H1 (cell line): ENCODE measurements at regions of chr7 and their contacts with region 1.

Region 1: DNA sequence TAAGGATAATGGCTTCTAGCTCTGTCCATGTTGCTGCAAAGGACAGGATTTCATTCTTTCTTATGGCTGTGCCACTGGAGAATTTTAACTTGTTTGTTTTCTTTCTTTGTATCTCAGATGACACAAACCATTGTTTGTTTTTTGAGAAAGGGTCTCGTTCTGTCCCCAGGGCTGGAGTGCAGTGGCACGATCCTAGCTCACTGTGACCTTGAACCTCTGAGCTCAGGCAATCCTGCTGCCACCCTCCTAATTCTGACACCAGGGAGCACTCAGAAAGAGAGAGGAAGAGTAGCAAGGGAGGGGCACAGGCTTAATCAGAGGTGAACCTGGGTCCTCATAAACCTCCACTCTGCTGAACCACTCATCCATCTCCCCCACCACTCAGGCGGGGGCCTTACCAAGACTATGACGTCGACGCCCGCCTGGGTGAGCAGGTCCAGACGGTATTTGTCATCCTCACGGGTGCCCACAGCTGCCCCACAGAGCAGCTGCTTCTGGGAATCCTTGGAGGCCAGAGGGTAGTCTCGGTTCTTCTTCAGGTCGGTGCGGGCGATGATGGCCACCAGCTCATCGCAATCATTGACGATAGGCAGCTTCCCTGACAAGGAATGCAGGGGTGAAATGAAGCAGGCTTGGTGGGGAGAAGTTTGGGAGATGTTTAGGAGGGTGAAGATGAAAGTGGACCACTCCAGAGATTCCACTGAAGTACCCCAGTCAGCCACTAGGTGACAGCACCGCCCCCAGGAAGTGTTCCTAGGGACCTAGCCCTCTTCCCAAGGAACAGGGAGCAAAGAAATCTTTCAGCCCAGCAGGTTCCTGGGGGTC is 11.6 kb downstream of the IMPDH1 start:
- DNase-seq: peak in 1 of 2 experiments; percentile 92
- H3K4me3 ChIP-seq: no peak overlapping the region
- H3K27ac ChIP-seq: no peak overlapping the region
- H3K4me1 ChIP-seq: no peaks in the 10 kb centered on the region
- H3K27me3 ChIP-seq: no peaks in the 10 kb centered on the region
- CTCF ChIP-seq: peak; percentile 89 to 96 (median 92)
- EP300 ChIP-seq: no peak
- POLR2A ChIP-seq: no peak
- RAD21 ChIP-seq: peak; percentile 83 to 86

Region 2: DNA sequence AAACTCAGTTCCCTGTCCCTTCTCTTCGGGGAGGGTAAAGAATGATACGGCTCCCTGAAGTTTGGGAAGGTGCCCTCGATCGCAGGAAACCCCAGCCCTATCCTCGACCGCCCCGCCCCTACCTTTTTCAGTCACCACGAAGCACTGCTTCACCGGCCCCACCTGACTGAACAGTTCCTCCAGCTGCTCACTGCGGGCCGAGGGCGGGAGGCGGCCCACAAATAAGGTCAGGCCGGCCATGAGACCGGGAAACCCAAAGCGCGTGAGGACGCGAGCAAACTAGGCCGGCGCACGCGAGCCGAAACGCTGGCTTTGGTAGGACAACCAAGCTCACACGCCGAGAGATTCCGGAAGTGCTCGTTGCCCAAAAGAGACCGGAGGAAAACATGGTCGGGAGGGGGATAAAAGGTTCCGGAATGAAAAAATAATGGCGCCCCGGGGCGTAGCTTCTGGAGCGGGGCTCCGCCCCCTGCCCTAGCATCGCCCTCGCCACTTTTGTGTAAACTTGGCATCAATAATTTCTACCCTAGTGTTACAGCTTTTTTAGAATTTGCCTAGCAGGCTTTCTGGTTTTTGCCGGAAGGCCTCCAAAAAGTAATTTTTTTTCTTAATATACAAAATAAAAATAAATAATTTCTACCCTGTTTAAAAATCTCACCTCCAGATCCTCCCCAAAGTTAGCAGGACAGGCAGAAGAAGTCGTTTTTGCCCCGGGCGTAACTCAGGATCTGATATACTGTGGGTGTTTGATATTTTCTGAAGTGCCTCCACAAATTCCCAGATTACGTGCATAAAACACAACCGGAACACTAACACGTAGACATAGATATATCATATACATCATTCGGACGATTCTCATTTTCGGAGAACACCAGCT is 54.4 kb before region 1 on chr7 and contains the start of gene RBM28:
- CTCF ChIA-PET with region 1: interaction called, 345 read pairs
- POLR2A ChIA-PET with region 1: no interaction called
- DNase-seq: peak; percentile 65 to 95
- H3K4me3 ChIP-seq: peak within 1 kb of the TSS; percentile 67 to 90 (median 88)
- H3K27ac ChIP-seq: peak within 1 kb of the TSS; percentile 90
- H3K4me1 ChIP-seq: peaks cover 0 to 5% (median 4%) of the 10 kb centered on the region in 4 experiments; a peak in 3 of 7 replicates
- H3K27me3 ChIP-seq: peaks cover under 1 to 7% (median 2%) of the 10 kb centered on the region in 4 experiments; a peak in 6 of 7 replicates
- CTCF ChIP-seq: no peak
- EP300 ChIP-seq: no peak
- POLR2A ChIP-seq: peak; percentile 85 to 91
- RAD21 ChIP-seq: 0 out of 4 replicates have a peak, but pooled peaks of 1 of the 2 experiments have one; percentile 9
- total RNA-seq, gene RBM28: 65.3 and 68.0 TPM in 2 replicates

Region 3: DNA sequence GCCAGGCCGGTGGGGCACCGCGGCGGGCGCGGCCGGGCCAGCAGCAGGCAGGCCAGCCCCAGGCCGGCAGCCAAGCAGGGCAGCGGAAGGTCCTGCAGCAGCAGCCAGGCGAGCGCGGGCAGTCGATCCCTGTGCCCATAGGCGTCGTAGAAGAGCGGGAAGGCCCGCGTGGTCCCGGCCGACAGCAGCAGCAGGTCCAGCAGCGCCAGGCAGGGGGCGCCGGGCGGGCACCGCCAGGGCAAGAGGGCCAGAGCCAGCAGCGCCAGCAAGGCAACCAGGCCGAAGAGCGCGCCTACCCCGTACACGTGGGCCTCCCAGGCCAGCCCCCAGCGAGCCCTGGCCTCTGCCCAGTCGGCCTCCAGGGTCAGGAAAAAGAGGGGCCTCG is 46.1 kb before region 1 on chr7:
- CTCF ChIA-PET with region 1: interaction called, 345 read pairs
- POLR2A ChIA-PET with region 1: interaction called, 3 read pairs
- DNase-seq: peak; percentile 56 to 90
- H3K4me3 ChIP-seq: 0 out of 8 replicates have a peak overlapping the region, but pooled peaks of 1 of the 4 experiments have one; percentile 18
- H3K27ac ChIP-seq: no peak overlapping the region
- H3K4me1 ChIP-seq: peaks cover 0 to 7% (median 5%) of the 10 kb centered on the region in 4 experiments; a peak in 6 of 7 replicates
- H3K27me3 ChIP-seq: peaks cover 34 to 71% (median 57%) of the 10 kb centered on the region in 4 experiments
- CTCF ChIP-seq: peak; percentile 88 to 97 (median 90)
- EP300 ChIP-seq: no peak
- POLR2A ChIP-seq: no peak
- RAD21 ChIP-seq: peak; percentile 66 to 78

Region 4: GRCh38 chr7:128409596-128410160 is 11.4 kb after region 1 on chr7 and contains the start of gene IMPDH1:
- CTCF ChIA-PET with region 1: interaction called, 174 read pairs
- POLR2A ChIA-PET with region 1: interaction called, 8 read pairs
- DNase-seq: peak in 1 of 2 experiments; percentile 97
- H3K4me3 ChIP-seq: peak within 1 kb of the TSS; percentile 52 to 78 (median 64)
- H3K27ac ChIP-seq: no peak within 1 kb of the TSS
- H3K4me1 ChIP-seq: peaks cover 0 to 30% (median 23%) of the 10 kb centered on the region in 4 experiments; a peak in 6 of 7 replicates
- H3K27me3 ChIP-seq: peaks cover 33 to 73% (median 53%) of the 10 kb centered on the region in 4 experiments
- CTCF ChIP-seq: no peak
- EP300 ChIP-seq: no peak
- POLR2A ChIP-seq: peak in 1 of 2 experiments; percentile 51; a peak in 1 of 3 replicates
- RAD21 ChIP-seq: no peak
- total RNA-seq, gene IMPDH1: 44.0 and 45.8 TPM in 2 replicates